Right lobe of liver (tissue), 6 donors: ENCODE measurements at regions of chr1 and their contacts with region 1.

Region 1: DNA sequence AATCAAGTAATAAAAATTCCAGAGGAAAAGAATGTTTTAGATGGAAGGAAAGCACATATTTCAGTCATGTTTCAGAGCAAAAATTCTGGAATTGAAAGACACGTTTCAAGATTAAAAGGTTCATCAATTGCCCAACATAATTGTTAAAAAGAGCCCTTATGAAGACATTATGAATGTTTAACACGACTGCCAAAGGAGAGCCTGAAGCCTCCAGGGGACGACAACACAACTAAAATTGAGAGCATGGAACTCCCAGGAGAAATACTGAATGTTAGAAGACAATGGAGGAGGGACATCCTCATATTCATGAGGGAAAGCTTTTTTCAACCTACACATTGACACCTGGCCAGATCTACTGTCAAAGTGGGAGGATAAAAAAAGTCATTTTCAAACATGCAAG is 16.0 kb downstream of the OR2T11 start:
- DNase-seq: peak in 1 of 3 donors; percentile 56
- ATAC-seq: peak; percentile 71 to 82 (median 77)
- H3K4me3 ChIP-seq: no peak overlapping the region
- H3K27ac ChIP-seq: no peak overlapping the region
- H3K4me1 ChIP-seq: no peaks in the 10 kb centered on the region
- H3K27me3 ChIP-seq: no peaks in the 10 kb centered on the region
- CTCF ChIP-seq: peak; percentile 52 to 75 (median 68)
- POLR2A ChIP-seq: no peak

Region 2: DNA sequence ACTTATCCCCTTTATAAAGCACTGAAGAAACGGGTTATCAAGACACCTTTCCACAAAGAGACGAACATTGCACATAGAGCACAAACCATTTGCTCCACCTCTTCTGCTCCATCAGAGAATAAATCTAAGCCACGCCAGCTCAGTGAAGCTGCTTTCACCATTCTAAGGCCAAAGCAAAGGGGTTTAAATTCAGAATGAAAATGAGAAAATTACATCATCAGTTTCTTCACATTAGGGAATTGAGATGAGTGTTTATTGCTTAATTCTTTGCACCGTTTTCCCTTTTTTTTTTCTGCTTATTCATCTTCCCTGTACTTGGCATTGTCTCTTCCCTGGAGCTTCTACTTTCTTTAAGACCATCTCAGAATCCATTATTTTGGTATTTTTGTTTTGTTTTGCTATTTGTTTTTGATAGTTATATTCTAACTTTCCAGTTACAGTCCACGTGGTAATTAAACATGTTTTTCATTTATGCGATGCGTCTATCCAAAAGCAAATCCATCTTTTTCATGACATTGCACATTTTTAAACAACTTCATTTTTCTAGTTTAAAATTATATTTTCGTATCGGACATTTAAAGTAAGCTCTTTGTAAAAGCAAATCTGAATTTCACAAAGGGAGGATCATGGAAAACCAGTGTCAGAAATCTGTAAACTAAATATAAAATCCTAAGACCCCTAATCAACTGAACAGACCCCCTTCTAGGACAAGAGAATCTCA is 42.5 kb before region 1 on chr1:
- intact Hi-C with region 1: no loop called
- DNase-seq: no peak
- ATAC-seq: no peak
- H3K4me3 ChIP-seq: no peak overlapping the region
- H3K27ac ChIP-seq: no peak overlapping the region
- H3K4me1 ChIP-seq: no peaks in the 10 kb centered on the region
- H3K27me3 ChIP-seq: no peaks in the 10 kb centered on the region
- CTCF ChIP-seq: no peak
- POLR2A ChIP-seq: no peak

Region 3: DNA sequence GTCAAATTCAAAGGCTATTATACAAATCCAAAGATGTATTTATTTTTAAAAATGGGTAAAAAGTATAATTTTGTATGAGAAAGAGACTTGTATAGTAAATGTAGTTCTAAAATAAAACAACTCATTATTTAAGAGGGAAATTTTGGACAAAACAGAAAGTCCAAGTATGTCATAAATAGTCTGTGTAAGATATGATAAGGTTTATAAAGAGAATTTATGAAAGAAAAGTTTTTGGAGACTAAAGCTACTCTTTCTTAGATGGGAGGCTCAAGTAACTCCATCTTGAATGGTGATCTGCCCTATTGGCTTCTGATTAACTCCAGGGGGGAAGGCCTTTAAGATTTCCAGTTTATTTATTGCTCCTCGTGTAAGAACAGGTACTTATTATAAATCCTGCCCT is 51.1 kb after region 1 on chr1:
- intact Hi-C with region 1: loop called in 1 of 2 experiments (anchors 10 kb)
- DNase-seq: no peak
- ATAC-seq: no peak
- H3K4me3 ChIP-seq: no peak overlapping the region
- H3K27ac ChIP-seq: no peak overlapping the region
- H3K4me1 ChIP-seq: no peaks in the 10 kb centered on the region
- H3K27me3 ChIP-seq: no peaks in the 10 kb centered on the region
- CTCF ChIP-seq: no peak
- POLR2A ChIP-seq: no peak